ENCODE measurements at regions of chr12 and their contacts with region 1.

Region 1: GRCh38 chr12:57111031-57111734 is at the start of gene STAT6:
- DNase-seq: peak; percentile 94
- ATAC-seq: peak; percentile 75
- H3K4me3 Mint-ChIP-seq: peak within 1 kb of the TSS; percentile 91
- H3K27ac Mint-ChIP-seq: peak within 1 kb of the TSS; percentile 95
- H3K4me1 Mint-ChIP-seq: peaks cover 53% of the 10 kb centered on the region
- H3K27me3 Mint-ChIP-seq: no peaks in the 10 kb centered on the region
- total RNA-seq, gene STAT6: 189 TPM

Region 2: DNA sequence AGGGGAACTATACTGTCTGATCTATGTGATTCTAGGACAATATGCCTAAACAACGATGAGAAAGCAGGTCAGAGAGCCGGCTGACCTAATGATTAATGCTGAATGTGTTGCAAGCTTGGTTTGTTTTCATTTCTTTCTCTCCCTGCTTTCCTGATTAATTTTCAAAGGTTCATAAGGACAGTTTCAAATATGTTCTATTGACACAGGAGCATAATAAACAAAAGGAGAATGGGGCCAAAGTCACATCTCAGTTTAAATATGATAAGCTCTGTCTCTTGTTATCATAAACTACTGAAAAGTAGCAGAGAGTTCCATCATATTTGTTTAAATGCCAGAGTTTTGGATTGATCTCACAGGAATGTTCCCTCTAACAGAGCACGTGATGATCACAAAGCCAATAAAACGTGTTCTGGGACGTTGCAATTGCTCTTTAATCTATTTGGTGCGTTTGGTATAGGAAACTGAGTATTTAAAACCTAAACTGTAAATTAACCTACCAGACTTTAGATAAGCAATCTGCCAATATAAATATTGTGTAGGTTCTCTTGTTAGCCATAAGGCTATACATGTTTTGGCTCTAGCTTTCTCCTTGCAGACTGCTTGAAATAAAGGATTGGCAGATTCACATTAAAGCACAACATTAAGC is 351.8 kb before region 1 on chr12:
- CTCF ChIA-PET with region 1: interaction called, 16 read pairs
- POLR2A ChIA-PET with region 1: interaction called, 8 read pairs
- DNase-seq: no peak
- ATAC-seq: no peak
- H3K4me3 Mint-ChIP-seq: no peak overlapping the region
- H3K27ac Mint-ChIP-seq: no peak overlapping the region
- H3K4me1 Mint-ChIP-seq: peaks cover 8% of the 10 kb centered on the region
- H3K27me3 Mint-ChIP-seq: peaks cover 6% of the 10 kb centered on the region

Region 3: GRCh38 chr12:57031138-57031725 is 80.0 kb before region 1 on chr12:
- CTCF ChIA-PET with region 1: interaction called, 25 read pairs
- POLR2A ChIA-PET with region 1: interaction called, 9 read pairs
- DNase-seq: peak; percentile 46
- ATAC-seq: peak; percentile 75
- H3K4me3 Mint-ChIP-seq: no peak overlapping the region
- H3K27ac Mint-ChIP-seq: peak overlapping the region; percentile 73
- H3K4me1 Mint-ChIP-seq: peaks cover 35% of the 10 kb centered on the region
- H3K27me3 Mint-ChIP-seq: no peaks in the 10 kb centered on the region

Region 4: DNA sequence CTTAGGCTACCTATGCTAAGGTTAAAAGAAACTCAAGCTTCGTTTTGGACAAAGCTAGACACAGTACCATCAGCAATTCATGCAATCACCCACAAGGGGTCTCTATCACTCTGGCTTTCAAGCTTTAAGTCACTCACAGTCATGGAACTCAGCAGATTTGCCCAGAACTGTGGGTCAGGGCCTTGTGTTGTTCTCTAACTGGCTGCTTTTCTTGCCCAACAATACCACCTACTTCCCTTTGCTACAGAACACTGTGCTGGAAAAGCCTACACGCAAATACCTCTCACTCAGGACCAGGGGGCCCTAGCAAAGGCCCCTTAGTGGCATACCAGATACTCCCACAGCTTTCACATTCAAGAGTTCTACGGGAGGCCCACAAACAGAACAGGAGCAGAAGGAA is 41.7 kb before region 1 on chr12:
- CTCF ChIA-PET with region 1: interaction called, 233 read pairs
- POLR2A ChIA-PET with region 1: interaction called, 84 read pairs
- DNase-seq: peak; percentile 78
- ATAC-seq: peak; percentile 95
- H3K4me3 Mint-ChIP-seq: peak overlapping the region; percentile 5
- H3K27ac Mint-ChIP-seq: peak overlapping the region; percentile 76
- H3K4me1 Mint-ChIP-seq: peaks cover 44% of the 10 kb centered on the region
- H3K27me3 Mint-ChIP-seq: no peaks in the 10 kb centered on the region

Region 5: GRCh38 chr12:57096099-57096572 is 15.0 kb before region 1 on chr12:
- CTCF ChIA-PET with region 1: interaction called, 233 read pairs
- POLR2A ChIA-PET with region 1: interaction called, 77 read pairs
- DNase-seq: no peak
- ATAC-seq: no peak
- H3K4me3 Mint-ChIP-seq: no peak overlapping the region
- H3K27ac Mint-ChIP-seq: peak overlapping the region; percentile 62
- H3K4me1 Mint-ChIP-seq: peaks cover 51% of the 10 kb centered on the region
- H3K27me3 Mint-ChIP-seq: no peaks in the 10 kb centered on the region

Region 6: DNA sequence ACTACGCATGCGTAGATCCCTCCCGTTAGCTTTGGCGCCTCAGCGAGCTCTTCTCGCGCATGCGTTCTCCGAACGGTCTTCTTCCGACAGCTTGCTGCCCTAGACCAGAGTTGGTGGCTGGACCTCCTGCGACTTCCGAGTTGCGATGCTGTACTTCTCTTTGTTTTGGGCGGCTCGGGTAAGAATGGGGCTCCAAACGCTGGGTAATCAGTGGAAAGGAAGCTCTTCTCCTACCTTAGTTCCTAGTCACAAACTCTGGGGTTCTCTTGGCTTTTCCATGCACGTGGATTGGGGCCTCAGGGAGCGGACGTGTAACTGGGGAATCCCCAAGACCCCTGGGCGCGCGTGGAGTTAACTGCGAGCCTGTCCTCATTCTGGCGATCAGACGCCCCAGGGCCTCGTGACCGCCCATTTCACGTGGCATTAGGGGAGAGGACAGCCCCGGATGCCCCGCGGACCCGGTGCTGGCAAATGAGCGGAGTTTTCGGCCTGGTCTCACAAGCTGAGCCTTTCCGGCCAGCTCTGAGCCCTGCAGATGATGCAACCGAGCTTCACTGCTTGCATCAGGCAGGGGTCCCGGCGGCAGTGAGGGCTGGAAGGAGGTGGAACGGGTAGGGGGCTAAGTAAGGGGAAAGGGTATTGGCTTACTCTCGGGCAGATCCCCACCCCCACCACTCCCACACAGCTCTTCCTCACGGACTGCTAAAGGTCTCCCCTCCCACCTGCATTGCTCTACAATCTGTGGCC is 118.6 kb after region 1 on chr12 and contains the start of gene SHMT2:
- CTCF ChIA-PET with region 1: interaction called, 10 read pairs
- POLR2A ChIA-PET with region 1: interaction called, 3 read pairs
- DNase-seq: peak; percentile 96
- ATAC-seq: peak; percentile 74
- H3K4me3 Mint-ChIP-seq: peak within 1 kb of the TSS; percentile 98
- H3K27ac Mint-ChIP-seq: peak within 1 kb of the TSS; percentile 94
- H3K4me1 Mint-ChIP-seq: peaks cover 67% of the 10 kb centered on the region
- H3K27me3 Mint-ChIP-seq: peaks cover 21% of the 10 kb centered on the region
- total RNA-seq, gene SHMT2: 194 to 208 TPM

Measured in activated CD8-positive, alpha-beta T cell treated with anti-CD3 and anti-CD28 coated beads, Interleukin-2, amount 10 ng/mL, durations not matched to agents 7 days and 5 days (primary cell).